B cell (primary cell): ENCODE measurements at regions of chr10 and their contacts with region 1.

Region 1: GRCh38 chr10:14556285-14556956 is 218.3 kb downstream of the FAM107B start:
- DNase-seq: peak; percentile 68
- ATAC-seq: peak; percentile 60
- H3K4me3 ChIP-seq: peak overlapping the region in 1 of 5 experiments; percentile 5
- H3K4me3 Mint-ChIP-seq: peak overlapping the region; percentile 79
- H3K27ac ChIP-seq: peak overlapping the region; percentile 54 to 70
- H3K27ac Mint-ChIP-seq: peak overlapping the region; percentile 92
- H3K4me1 ChIP-seq: peaks cover 82 to 84% of the 10 kb centered on the region in 2 donors
- H3K4me1 Mint-ChIP-seq: peaks cover 92% of the 10 kb centered on the region
- H3K27me3 ChIP-seq: no peaks in the 10 kb centered on the region
- H3K27me3 Mint-ChIP-seq: no peaks in the 10 kb centered on the region
- CTCF ChIP-seq: peak; percentile 43

Region 2: DNA sequence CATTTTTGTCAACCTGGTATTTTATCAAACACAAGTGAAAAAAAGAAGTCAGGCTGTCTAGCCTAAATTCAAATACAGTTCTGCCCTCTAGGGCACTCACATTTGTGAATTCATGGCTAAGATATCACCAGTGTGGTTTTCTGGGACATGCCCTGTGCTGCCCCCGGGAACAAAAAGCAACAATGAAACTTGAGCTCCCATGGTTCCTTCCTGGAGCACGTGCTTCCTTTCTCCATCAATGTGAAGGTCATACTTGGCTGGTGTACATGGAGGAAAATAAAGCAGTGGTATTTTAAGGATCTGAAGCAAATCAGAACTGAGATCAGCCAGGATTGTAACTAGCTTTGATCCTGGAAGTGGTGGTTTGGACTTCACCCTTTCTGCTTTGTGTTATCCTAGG is 96.8 kb before region 1 on chr10:
- CTCF ChIA-PET with region 1: no interaction called
- POLR2A ChIA-PET with region 1: no interaction called
- intact Hi-C with region 1: no loop called
- DNase-seq: no peak
- ATAC-seq: no peak
- H3K4me3 ChIP-seq: no peak overlapping the region
- H3K4me3 Mint-ChIP-seq: no peak overlapping the region
- H3K27ac ChIP-seq: no peak overlapping the region
- H3K27ac Mint-ChIP-seq: no peak overlapping the region
- H3K4me1 ChIP-seq: no peaks in the 10 kb centered on the region
- H3K4me1 Mint-ChIP-seq: no peaks in the 10 kb centered on the region
- H3K27me3 ChIP-seq: peaks cover 0 to 5% (median 2%) of the 10 kb centered on the region in 4 experiments
- H3K27me3 Mint-ChIP-seq: peaks cover 44% of the 10 kb centered on the region
- CTCF ChIP-seq: no peak

Region 3: DNA sequence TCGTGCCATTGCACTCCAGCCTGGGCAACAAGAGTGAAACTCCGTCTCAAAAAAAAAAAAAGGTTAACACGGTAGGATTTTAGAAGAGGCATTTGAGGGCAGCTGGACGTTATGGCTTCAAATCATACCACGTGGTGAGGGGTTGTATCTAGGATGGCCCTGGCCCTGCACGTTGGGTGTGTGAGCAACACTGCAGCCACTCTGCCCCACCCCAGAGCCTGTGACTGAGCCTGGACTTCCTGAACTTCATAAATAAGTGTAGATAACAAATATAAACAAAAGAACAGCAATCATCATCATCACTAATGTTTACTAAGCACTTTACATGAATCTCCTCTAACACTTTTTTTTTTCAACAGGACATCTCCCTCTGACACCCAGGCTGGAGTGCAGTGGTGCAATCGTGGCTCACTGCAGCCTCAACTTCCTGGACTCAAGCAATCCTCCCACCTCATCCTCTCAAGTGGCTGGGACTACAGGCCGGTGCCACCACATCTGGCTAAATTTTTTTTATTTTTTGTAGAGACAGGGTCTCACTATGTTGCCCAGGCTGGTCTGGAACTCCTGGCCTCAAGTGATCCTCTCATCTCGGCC is 56.2 kb before region 1 on chr10:
- CTCF ChIA-PET with region 1: interaction called, 3 read pairs
- POLR2A ChIA-PET with region 1: no interaction called
- intact Hi-C with region 1: loop called (anchors 5 kb)
- DNase-seq: no peak
- ATAC-seq: no peak
- H3K4me3 ChIP-seq: no peak overlapping the region
- H3K4me3 Mint-ChIP-seq: no peak overlapping the region
- H3K27ac ChIP-seq: no peak overlapping the region
- H3K27ac Mint-ChIP-seq: no peak overlapping the region
- H3K4me1 ChIP-seq: peaks cover 13 to 16% of the 10 kb centered on the region in 2 donors
- H3K4me1 Mint-ChIP-seq: peaks cover 27% of the 10 kb centered on the region
- H3K27me3 ChIP-seq: no peaks in the 10 kb centered on the region
- H3K27me3 Mint-ChIP-seq: no peaks in the 10 kb centered on the region
- CTCF ChIP-seq: no peak

Region 4: DNA sequence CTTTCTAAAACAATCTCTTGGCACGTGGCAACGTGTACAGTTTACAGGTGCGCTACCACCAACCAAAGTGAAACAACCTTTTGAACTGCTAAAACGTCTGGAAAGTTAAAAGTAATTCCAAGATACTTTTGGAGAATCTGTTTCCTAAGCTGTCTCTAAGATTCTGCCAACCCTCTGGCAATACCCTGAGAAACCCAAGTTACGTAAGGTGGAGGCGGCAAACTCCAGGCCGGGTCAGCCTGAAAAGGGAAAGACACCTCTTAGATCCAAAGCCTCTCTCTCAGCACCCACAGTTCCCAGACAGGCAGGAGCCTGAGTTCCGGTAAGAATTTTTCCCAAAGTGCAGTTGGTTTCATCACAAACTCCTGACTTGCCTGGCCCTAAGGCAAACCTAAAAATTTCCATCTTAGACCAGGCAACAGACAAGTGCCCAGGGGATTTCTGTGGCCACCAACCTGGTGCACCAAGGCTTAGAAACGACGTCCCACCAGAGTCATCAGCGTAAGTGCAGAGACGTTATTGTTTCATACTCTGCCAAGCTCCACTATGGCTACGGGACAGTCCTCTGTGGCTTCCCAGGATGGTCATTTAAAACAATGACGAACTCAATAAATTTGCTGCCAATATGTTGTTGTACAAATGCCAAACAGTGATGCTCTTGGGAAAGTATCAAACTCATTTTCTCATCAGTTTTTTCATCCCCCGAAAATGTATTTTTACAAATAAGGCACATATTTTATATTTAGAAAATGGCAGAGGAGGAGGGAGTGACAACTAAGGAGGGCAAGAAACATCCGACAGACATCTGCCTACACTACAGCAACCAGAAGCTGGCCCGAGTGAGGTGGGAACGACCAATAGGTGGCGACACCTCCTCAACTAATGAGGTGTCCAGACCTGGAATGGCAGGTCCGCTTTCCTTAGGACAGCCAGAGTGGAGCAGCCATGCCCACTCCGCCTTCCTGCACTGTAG is 19.9 kb before region 1 on chr10:
- CTCF ChIA-PET with region 1: interaction called, 22 read pairs
- POLR2A ChIA-PET with region 1: no interaction called
- intact Hi-C with region 1: no loop called
- DNase-seq: peak; percentile 62
- ATAC-seq: no peak
- H3K4me3 ChIP-seq: no peak overlapping the region
- H3K4me3 Mint-ChIP-seq: no peak overlapping the region
- H3K27ac ChIP-seq: peak overlapping the region in 1 of 2 donors; percentile 48
- H3K27ac Mint-ChIP-seq: no peak overlapping the region
- H3K4me1 ChIP-seq: peaks cover 0 to 10% of the 10 kb centered on the region in 2 donors
- H3K4me1 Mint-ChIP-seq: peaks cover 59% of the 10 kb centered on the region
- H3K27me3 ChIP-seq: no peaks in the 10 kb centered on the region
- H3K27me3 Mint-ChIP-seq: no peaks in the 10 kb centered on the region
- CTCF ChIP-seq: peak; percentile 76

Region 5: DNA sequence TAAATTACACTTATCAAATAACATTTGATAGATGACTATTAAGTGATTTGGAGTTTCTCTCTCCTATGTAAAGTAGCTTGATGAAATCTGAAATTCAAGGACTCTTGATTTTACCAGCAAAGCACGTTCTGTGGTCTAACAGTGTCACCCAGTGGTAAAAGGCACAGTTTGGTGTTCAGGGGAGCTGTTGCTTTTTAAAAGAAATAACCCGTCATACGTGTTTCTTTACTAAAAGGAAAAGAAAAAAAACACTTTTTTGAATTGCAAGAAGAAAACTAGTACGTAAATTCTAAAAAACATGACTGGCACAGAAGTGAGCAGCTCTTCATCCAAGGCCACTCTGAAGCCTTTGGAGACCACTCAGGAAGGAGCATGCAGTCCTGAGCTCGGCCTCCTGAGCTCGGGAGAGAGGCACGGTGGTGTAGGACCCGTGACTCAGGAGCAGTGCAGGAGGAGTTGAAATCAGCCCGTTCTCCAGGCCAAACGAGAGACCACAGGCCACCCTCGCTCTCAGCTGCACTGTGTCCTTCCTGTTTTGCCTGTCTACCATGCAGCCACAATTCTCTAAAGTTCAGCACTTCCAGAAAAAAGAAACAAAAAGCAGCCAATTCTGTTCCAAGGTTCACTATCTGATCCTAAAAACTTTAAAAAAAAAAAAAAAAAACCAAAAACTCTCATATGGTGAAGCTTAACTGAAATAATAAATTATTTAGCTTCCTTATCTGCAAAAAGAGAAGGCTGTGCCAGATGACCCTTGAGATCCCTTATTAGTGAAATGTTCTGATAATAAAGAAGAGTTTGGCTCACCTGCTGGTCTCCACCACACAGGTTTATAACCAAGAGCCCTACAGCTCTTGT is 13.1 kb before region 1 on chr10:
- CTCF ChIA-PET with region 1: interaction called, 22 read pairs
- POLR2A ChIA-PET with region 1: no interaction called
- intact Hi-C with region 1: no loop called
- DNase-seq: no peak
- ATAC-seq: no peak
- H3K4me3 ChIP-seq: no peak overlapping the region
- H3K4me3 Mint-ChIP-seq: peak overlapping the region; percentile 40
- H3K27ac ChIP-seq: peak overlapping the region; percentile 53 to 56
- H3K27ac Mint-ChIP-seq: peak overlapping the region; percentile 81
- H3K4me1 ChIP-seq: peaks cover 25 to 28% of the 10 kb centered on the region in 2 donors
- H3K4me1 Mint-ChIP-seq: peaks cover 77% of the 10 kb centered on the region
- H3K27me3 ChIP-seq: no peaks in the 10 kb centered on the region
- H3K27me3 Mint-ChIP-seq: no peaks in the 10 kb centered on the region
- CTCF ChIP-seq: peak; percentile 32

Region 6: GRCh38 chr10:14571866-14572507 is 15.6 kb after region 1 on chr10:
- CTCF ChIA-PET with region 1: interaction called, 3 read pairs
- POLR2A ChIA-PET with region 1: interaction called, 3 read pairs
- intact Hi-C with region 1: loop called (anchors 2 kb)
- DNase-seq: peak; percentile 59
- ATAC-seq: peak; percentile 66
- H3K4me3 ChIP-seq: peak overlapping the region in 3 of 5 experiments; percentile 2 to 40 (median 25)
- H3K4me3 Mint-ChIP-seq: peak overlapping the region; percentile 56
- H3K27ac ChIP-seq: peak overlapping the region; percentile 60 to 87
- H3K27ac Mint-ChIP-seq: peak overlapping the region; percentile 82
- H3K4me1 ChIP-seq: peaks cover 54 to 58% of the 10 kb centered on the region in 2 donors
- H3K4me1 Mint-ChIP-seq: peaks cover 84% of the 10 kb centered on the region
- H3K27me3 ChIP-seq: no peaks in the 10 kb centered on the region
- H3K27me3 Mint-ChIP-seq: no peaks in the 10 kb centered on the region
- CTCF ChIP-seq: no peak

Region 7: GRCh38 chr10:14635043-14635710 is 78.8 kb after region 1 on chr10:
- CTCF ChIA-PET with region 1: no interaction called
- POLR2A ChIA-PET with region 1: no interaction called
- intact Hi-C with region 1: no loop called
- DNase-seq: no peak
- ATAC-seq: no peak
- H3K4me3 ChIP-seq: no peak overlapping the region
- H3K4me3 Mint-ChIP-seq: no peak overlapping the region
- H3K27ac ChIP-seq: no peak overlapping the region
- H3K27ac Mint-ChIP-seq: peak overlapping the region; percentile 20
- H3K4me1 ChIP-seq: no peaks in the 10 kb centered on the region
- H3K4me1 Mint-ChIP-seq: no peaks in the 10 kb centered on the region
- H3K27me3 ChIP-seq: no peaks in the 10 kb centered on the region
- H3K27me3 Mint-ChIP-seq: no peaks in the 10 kb centered on the region
- CTCF ChIP-seq: no peak